ENCODE measurements at regions of chr9 and their contacts with region 1.

Region 1: GRCh38 chr9:122810306-122810946 is 10.5 kb downstream of the OR1K1 start:
- DNase-seq: peak in 3 of 4 donors; percentile 60 to 85 (median 73)
- ATAC-seq: peak; percentile 98
- H3K4me3 ChIP-seq: no peak overlapping the region
- H3K27ac ChIP-seq: no peak overlapping the region
- H3K4me1 ChIP-seq: peaks cover 0 to 6% of the 10 kb centered on the region in 2 donors
- H3K27me3 ChIP-seq: no peaks in the 10 kb centered on the region
- CTCF ChIP-seq: peak; percentile 59 to 80

Region 2: GRCh38 chr9:122464633-122465567 is 345.5 kb before region 1 on chr9:
- intact Hi-C with region 1: loop called (anchors 5 to 10 kb)
- DNase-seq: peak in 3 of 4 donors; percentile 68 to 83 (median 70)
- ATAC-seq: peak; percentile 98
- H3K4me3 ChIP-seq: peak overlapping the region; percentile 23 to 37
- H3K27ac ChIP-seq: peak overlapping the region in 1 of 2 donors; percentile 49
- H3K4me1 ChIP-seq: peaks cover 0 to 11% of the 10 kb centered on the region in 2 donors
- H3K27me3 ChIP-seq: peaks cover 4 to 6% of the 10 kb centered on the region in 2 donors
- CTCF ChIP-seq: peak; percentile 82 to 83

Region 3: DNA sequence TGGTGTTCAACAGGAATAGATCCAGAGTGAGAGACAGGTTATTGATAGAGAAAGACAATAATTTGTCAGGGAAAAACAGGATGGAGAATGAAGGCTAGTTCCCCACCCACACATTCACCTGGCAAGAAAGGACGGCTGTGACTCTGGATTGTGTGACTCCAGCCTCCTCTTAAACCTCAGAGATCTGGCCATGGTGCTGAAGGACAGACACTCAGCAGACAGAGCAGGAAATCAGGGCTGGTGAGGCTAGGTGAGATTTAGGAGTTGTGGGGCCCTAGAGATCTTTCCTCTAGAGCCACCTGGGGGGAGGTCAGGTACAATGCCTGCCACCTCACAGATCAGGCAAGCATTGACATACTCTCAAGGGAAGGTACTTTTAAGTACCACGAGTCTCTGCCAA is 168.2 kb before region 1 on chr9:
- intact Hi-C with region 1: no loop called
- DNase-seq: peak in 1 of 4 donors; percentile 2
- ATAC-seq: no peak
- H3K4me3 ChIP-seq: no peak overlapping the region
- H3K27ac ChIP-seq: no peak overlapping the region
- H3K4me1 ChIP-seq: no peaks in the 10 kb centered on the region
- H3K27me3 ChIP-seq: no peaks in the 10 kb centered on the region
- CTCF ChIP-seq: no peak